A549 (cell line): ENCODE measurements at regions of chr7 and their contacts with region 1.

Region 1: DNA sequence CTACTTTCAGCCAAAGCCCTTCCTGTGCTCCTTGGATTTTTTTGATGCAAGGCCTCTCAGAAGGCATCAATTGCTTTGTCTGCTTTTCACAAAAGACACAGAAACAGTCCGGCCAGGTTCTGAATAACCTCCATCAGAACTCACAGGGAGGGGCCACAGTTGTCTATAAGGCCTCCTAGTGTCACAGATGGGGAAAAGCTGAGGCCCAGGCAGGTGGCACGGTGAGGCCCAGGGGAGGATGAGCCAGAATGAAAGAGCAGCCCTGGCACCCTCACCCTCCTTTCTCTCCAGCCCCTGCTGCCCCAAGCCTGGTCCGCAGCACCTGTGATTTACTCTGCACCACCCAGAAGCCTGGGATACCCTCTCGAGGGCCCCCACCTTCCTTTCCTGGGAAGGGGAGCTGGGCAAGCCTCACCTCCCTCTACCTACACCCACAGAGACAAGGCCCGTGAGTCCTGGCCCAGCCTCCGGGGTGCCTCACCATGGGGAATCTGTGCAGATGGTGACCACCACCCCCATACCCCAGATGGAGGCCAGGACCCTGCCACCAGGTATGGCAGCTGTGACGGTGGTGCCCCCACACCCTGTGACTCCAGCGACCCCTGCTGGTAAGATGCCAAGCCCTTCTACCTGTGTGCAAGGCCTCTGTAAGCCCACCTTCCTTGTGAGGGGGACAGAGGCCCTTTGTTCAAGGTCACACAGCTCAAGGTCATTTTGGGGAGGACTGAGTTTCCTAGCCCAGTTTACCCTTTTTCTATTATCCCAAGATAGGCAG is 26.2 kb upstream of the ZNF467 start:
- DNase-seq: peak in 1 of 2 experiments; percentile 22
- ATAC-seq: peak in 1 of 2 experiments; percentile 40; a peak in 3 of 6 replicates
- H3K4me3 ChIP-seq: no peak overlapping the region
- H3K27ac ChIP-seq: no peak overlapping the region
- H3K4me1 ChIP-seq: no peaks in the 10 kb centered on the region
- CTCF ChIP-seq: peak; percentile 25; the same call in 1 of the 3 replicates
- EP300 ChIP-seq: no peak
- POLR2A ChIP-seq: no peak
- RAD21 ChIP-seq: peak; percentile 30 to 47; a peak in 2 of 5 replicates

Region 2: GRCh38 chr7:149046416-149046815 is 753.2 kb before region 1 on chr7:
- CTCF ChIA-PET with region 1: no interaction called
- POLR2A ChIA-PET with region 1: no interaction called
- DNase-seq: no peak
- ATAC-seq: no peak
- H3K4me3 ChIP-seq: no peak overlapping the region
- H3K27ac ChIP-seq: no peak overlapping the region
- H3K4me1 ChIP-seq: no peaks in the 10 kb centered on the region
- CTCF ChIP-seq: no peak
- EP300 ChIP-seq: no peak
- POLR2A ChIP-seq: no peak
- RAD21 ChIP-seq: no peak

Region 3: GRCh38 chr7:149787428-149788299 is 11.9 kb before region 1 on chr7:
- CTCF ChIA-PET with region 1: interaction called, 10 read pairs
- POLR2A ChIA-PET with region 1: no interaction called
- DNase-seq: peak; percentile 58 to 64
- ATAC-seq: peak; percentile 74 to 88
- H3K4me3 ChIP-seq: no peak overlapping the region
- H3K27ac ChIP-seq: peak overlapping the region in 1 of 2 experiments; percentile 50; a peak in 2 of 6 replicates
- H3K4me1 ChIP-seq: peaks cover 8% of the 10 kb centered on the region; the same call in 1 of the 3 replicates
- CTCF ChIP-seq: peak; percentile 36
- EP300 ChIP-seq: no peak
- POLR2A ChIP-seq: no peak
- RAD21 ChIP-seq: peak in 1 of 2 experiments; percentile 33; a peak in 2 of 5 replicates

Region 4: DNA sequence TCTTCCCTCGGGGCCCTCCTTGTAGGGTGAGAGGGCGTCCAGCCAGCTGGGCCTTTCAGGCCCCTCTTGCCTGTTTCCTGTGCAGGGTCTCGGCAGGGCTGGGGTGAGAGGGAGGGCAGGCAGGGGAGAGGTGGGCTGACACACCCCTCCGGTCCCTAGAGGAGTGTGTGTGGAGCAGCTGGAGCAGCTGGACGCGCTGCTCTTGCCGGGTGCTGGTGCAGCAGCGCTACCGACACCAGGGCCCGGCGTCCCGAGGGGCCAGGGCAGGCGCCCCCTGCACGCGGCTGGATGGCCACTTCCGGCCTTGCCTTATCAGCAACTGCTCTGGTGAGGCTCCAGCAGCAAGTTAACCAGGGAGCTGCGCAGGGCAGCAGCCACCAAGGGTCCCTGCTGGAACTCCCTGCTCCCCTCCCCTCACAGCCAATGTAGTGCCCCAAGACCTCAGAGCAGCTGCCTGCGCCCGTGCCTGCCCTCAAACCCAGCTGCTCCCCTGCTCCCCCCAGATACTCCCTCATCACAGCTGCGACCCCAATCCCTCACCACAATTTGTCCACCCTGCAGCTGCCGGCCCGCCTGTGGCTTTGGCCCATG is 22.9 kb after region 1 on chr7:
- CTCF ChIA-PET with region 1: no interaction called
- POLR2A ChIA-PET with region 1: no interaction called
- DNase-seq: no peak
- ATAC-seq: no peak
- H3K4me3 ChIP-seq: no peak overlapping the region
- H3K27ac ChIP-seq: no peak overlapping the region
- H3K4me1 ChIP-seq: no peaks in the 10 kb centered on the region
- CTCF ChIP-seq: no peak
- EP300 ChIP-seq: no peak
- POLR2A ChIP-seq: no peak
- RAD21 ChIP-seq: no peak